ENCODE measurements at regions of chr1 and their contacts with region 1.

Region 1: DNA sequence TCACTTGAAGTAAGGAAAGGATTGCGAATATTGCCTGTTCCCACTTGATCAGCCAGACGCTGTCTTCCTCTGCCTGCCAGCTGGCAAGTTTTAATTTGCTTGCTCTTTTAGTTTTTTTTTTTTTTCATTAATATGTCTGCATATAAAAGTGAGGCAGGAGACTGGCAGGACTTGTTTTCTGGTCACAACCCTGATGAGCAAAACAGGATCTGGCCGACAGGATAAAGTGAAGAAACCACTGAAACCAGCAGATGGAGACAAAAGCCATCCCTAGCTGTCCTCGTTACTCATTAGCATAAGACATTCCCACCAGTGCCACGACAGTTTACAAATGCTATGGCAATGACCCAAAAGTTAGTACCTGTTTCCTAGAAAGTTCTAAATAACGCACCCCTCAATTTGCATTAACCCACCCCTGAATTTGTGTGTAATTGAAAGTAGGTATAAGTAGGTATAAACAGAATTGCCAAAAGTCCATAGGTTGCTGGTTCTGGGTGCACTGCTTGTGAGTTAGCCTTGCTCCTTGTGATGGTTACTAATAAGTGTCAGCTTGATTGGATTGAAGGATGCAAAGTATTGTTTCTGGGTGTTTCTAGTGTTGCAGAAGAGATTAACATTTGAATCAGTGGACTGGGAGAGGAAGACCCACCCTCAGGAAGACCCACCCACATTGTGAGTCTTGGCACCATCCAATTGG is 60.8 kb downstream of the ZNF684 start:
- DNase-seq: peak; percentile 75
- H3K4me3 ChIP-seq: no peak overlapping the region
- H3K27ac ChIP-seq: no peak overlapping the region
- H3K4me1 ChIP-seq: peaks cover 17% of the 10 kb centered on the region
- H3K27me3 ChIP-seq: no peaks in the 10 kb centered on the region
- CTCF ChIP-seq: peak; percentile 76

Region 2: DNA sequence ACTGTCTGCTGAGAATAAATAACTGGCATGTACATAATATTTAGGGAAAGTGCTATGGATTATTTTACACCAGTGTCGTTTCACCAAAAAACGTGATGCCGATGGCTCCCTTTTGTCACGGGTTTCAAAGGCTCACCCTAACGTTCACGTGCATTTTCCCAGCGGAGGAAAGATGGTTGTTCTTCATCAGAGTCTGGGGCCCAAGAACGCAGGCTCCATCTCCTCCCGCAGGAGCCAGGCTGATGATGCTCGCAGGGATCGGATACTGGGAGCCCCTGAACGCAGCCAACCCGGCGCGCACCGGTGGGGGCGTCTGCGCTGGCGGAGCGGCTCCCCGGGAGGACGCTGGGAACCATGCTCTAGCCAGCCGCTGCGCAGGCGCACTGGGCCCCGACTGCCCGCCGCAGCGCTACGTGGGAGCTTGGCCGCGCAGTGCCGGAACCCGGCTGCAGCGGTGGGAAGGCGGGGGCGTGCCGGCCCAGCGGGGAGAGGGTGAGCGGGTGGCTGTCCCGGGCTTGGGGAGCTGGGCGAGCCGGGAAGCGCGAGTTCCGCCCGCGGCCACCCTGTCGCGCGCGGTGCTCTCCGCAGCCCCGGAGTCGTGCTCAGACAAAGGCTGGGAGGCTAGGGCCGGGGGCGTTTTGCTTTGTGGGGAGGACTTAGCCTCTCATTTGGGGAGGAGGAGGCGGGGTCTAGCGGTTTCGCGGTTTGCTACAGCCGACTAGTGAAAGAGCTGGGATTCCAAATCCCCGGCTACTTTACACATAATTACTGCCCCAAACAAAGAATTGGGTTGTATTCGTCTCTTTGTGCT is 142.4 kb before region 1 on chr1 and contains the start of gene ZFP69B:
- CTCF ChIA-PET with region 1: no interaction called
- dilution Hi-C with region 1: no loop called
- in situ Hi-C with region 1: no loop called
- intact Hi-C with region 1: no loop called
- DNase-seq: peak; percentile 89
- H3K4me3 ChIP-seq: peak within 1 kb of the TSS; percentile 54 to 91 (median 60)
- H3K27ac ChIP-seq: peak within 1 kb of the TSS; percentile 65
- H3K4me1 ChIP-seq: peaks cover 23% of the 10 kb centered on the region
- H3K27me3 ChIP-seq: no peaks in the 10 kb centered on the region
- CTCF ChIP-seq: no peak
- total RNA-seq, gene ZFP69B: 6.7 to 10.1 TPM

Region 3: GRCh38 chr1:40531381-40532061 is 60.7 kb before region 1 on chr1 and contains the start of gene ZNF684:
- CTCF ChIA-PET with region 1: no interaction called
- dilution Hi-C with region 1: no loop called
- in situ Hi-C with region 1: no loop called
- intact Hi-C with region 1: no loop called
- DNase-seq: peak; percentile 97
- H3K4me3 ChIP-seq: peak within 1 kb of the TSS; percentile 49 to 68 (median 61)
- H3K27ac ChIP-seq: peak within 1 kb of the TSS; percentile 63
- H3K4me1 ChIP-seq: peaks cover 10% of the 10 kb centered on the region
- H3K27me3 ChIP-seq: no peaks in the 10 kb centered on the region
- CTCF ChIP-seq: no peak
- total RNA-seq, gene ZNF684: 3.7 to 4.1 TPM

Region 4: DNA sequence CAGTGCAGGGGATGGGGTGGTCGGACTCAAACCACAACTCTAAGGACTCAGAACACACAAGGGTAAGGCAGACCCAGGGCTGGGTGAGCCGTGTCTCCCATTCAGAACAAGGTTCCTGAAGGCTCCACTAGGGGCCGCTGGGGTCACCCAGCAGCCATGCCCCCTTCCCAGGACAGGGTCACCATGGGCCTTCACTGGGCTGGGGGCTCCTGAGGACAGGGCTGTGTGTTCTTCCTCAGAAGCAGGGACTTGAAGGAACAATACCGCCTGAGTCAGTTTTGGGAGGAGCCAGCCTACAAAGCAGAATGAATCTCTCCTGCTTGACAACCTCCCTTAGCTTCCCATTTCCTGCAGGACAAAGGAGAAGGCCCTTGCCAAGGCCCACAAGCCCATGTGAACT is 57.8 kb after region 1 on chr1:
- CTCF ChIA-PET with region 1: no interaction called
- dilution Hi-C with region 1: loop called (anchors 10 kb)
- in situ Hi-C with region 1: no loop called
- intact Hi-C with region 1: no loop called
- DNase-seq: no peak
- H3K4me3 ChIP-seq: no peak overlapping the region
- H3K27ac ChIP-seq: no peak overlapping the region
- H3K4me1 ChIP-seq: peaks cover 16% of the 10 kb centered on the region
- H3K27me3 ChIP-seq: no peaks in the 10 kb centered on the region
- CTCF ChIP-seq: peak in 1 of 2 donors; percentile 29

Region 5: GRCh38 chr1:40668769-40669525 is 76.7 kb after region 1 on chr1:
- CTCF ChIA-PET with region 1: no interaction called
- dilution Hi-C with region 1: loop called (anchors 5 kb)
- in situ Hi-C with region 1: no loop called
- intact Hi-C with region 1: loop called (anchors 1 kb)
- DNase-seq: peak; percentile 57
- H3K4me3 ChIP-seq: no peak overlapping the region
- H3K27ac ChIP-seq: no peak overlapping the region
- H3K4me1 ChIP-seq: peaks cover 7% of the 10 kb centered on the region
- H3K27me3 ChIP-seq: no peaks in the 10 kb centered on the region
- CTCF ChIP-seq: peak; percentile 94 to 95

Region 6: DNA sequence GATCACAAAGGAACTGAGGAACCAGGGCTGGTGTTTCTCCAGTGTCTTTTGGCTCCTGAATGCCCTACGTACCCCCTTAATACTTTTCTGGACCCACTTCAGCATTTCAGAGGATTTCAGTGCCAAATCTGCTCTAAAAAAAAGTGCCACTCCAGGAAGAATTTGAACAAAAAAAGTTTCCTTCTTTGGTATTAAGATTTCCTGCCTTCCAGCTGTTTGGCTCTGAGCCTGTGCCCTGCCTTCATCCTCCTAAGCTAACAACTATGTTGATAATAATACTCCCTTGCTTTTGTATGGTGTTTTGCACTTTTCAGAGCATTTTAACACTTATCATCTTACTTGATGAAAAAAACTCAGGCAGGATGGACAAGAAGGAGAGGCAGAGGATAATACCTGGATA is 84.2 kb after region 1 on chr1:
- CTCF ChIA-PET with region 1: no interaction called
- dilution Hi-C with region 1: loop called (anchors 5 kb)
- in situ Hi-C with region 1: no loop called
- intact Hi-C with region 1: no loop called
- DNase-seq: no peak
- H3K4me3 ChIP-seq: no peak overlapping the region
- H3K27ac ChIP-seq: no peak overlapping the region
- H3K4me1 ChIP-seq: no peaks in the 10 kb centered on the region
- H3K27me3 ChIP-seq: no peaks in the 10 kb centered on the region
- CTCF ChIP-seq: no peak

Region 7: DNA sequence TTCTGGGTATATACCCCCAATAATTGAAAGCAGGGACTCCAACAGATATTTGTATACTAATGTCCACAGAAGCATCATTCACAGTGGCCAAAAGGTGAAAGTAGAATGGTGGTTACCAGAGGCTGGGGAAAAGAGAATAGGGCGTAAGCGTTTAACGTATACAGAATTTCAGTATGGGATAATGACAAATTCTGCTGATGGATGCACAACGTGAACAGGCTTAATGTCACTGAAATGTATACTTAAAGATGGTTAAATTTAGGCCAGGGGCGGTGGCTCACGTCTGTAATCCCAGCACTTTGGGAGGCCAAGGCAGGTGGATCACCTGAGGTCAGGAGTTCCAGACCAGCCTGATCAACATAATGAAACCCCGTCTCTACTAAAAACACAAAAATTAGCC is 94.8 kb after region 1 on chr1:
- CTCF ChIA-PET with region 1: no interaction called
- dilution Hi-C with region 1: no loop called
- in situ Hi-C with region 1: no loop called
- intact Hi-C with region 1: no loop called
- DNase-seq: no peak
- H3K4me3 ChIP-seq: no peak overlapping the region
- H3K27ac ChIP-seq: no peak overlapping the region
- H3K4me1 ChIP-seq: peaks cover 4% of the 10 kb centered on the region
- H3K27me3 ChIP-seq: no peaks in the 10 kb centered on the region
- CTCF ChIP-seq: no peak

Region 8: DNA sequence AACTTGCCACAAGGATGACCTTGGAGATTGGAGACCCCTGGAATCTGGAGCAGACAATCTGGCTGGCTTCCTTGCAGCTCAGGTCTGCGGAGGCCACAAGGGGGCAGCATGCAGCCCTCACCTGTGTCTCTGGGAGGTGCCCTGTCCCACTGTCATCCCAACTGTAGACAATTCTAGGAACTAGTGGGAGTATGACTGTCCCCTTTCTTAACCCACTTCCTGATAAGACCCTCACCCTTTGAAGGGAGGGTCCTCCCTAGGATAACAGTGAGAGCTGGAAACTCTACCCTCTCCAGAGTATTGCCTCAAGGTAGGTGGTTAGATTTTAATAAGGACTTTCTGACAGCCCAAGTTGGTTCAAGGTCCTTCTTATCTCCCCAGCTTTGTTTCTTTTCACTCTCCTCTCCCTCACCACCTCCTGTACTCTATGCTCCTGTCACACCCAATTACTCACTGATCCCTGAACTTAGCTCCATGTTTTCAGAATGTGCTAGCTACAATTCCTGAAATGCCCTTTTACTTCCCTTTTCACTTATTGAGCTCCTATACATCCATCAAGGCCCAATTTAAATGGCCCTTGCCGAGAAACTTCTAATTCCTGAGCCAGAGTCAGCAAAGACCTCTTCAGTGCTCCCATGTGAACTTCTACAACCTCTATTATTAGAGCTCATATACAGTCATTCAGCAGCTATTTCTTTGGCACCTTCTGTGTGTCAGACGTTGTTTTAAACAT is 182.2 kb after region 1 on chr1:
- CTCF ChIA-PET with region 1: no interaction called
- dilution Hi-C with region 1: loop called (anchors 5 kb)
- in situ Hi-C with region 1: no loop called
- intact Hi-C with region 1: no loop called
- DNase-seq: no peak
- H3K4me3 ChIP-seq: no peak overlapping the region
- H3K27ac ChIP-seq: no peak overlapping the region
- H3K4me1 ChIP-seq: peaks cover 13% of the 10 kb centered on the region
- H3K27me3 ChIP-seq: no peaks in the 10 kb centered on the region
- CTCF ChIP-seq: peak; percentile 83 to 84